Colonic mucosa (tissue), 4 donors: ENCODE measurements at regions of chr20 and their contacts with region 1.

Region 1: DNA sequence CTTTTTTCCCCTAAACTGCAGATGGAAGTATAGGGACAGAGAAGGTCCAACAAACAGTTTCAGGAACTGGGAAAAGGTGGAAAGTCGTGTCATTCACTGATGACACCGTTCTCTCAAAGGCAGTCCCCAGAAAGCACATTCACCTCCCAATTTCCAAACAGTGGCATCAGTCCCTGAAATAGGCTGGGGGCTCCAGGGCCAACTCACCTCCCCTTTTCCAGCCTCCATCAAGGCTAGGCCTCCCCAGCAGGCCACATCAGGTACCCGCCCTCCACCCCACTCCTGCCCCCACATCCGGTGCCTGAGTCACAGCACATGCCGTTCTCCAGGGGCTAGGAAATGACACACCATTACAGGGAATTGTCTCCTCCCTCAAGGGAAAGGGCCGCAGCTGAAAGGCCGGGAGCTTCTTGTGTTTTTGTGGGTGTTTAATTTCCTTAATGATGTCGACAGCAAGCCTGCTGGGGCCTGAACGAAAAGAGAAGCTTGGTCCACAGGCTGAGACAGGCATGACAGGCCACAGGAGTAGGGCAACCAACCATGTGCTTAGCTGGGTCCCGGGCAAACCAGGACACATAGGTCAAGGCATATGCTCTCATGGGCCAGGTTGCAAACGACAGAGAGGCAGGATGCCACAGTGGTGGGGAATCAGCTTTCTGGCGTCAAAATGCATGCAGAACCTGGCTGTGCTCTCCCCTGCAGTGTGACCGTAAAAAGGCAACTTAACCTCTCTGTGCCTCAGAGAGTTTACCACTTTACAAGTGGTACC is 39.2 kb downstream of the ZMYND8 start:
- DNase-seq: peak; percentile 62
- H3K4me3 ChIP-seq: no peak overlapping the region
- H3K27ac ChIP-seq: peak overlapping the region; percentile 96
- H3K4me1 ChIP-seq: peaks cover 44% of the 10 kb centered on the region
- H3K27me3 ChIP-seq: no peaks in the 10 kb centered on the region
- CTCF ChIP-seq: no peak

Region 2: DNA sequence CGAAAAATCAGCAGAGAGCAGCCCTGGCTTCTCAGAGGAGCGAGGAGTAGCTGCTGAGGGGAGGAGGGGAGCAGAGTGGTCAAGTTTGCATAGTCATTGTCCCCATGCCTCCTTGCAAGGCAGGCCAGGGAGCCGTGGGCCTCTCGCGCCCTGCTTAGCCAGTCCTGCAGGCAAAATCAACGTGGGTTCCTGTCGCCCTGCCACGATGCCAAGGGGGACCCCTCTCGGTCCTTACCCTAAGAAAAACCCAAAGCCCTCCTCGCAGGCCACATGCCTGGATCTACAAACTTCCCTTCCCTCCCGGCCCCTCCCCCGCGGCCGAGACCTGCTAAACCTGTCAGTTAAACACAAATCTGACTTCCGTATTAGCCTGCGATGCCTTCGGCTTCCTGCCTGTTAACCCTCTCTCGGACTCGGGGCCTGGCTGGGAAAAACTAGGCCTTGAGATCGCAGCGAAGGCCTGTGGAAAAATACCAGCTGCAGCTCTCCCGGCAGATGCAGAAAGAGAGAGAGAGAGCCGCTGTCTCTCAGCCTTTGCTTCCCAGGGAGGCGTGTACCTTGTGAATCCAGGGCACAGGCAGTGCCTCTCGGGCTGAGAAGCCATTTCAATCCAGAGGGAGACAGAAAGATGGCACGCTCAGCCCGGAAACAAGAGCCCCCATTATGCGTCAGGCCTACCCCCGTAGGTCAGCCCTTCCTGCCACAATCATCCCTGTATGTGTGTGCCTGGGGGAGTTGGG is 40.2 kb after region 1 on chr20:
- intact Hi-C with region 1: loop called (anchors 2 kb)
- DNase-seq: peak; percentile 95
- H3K4me3 ChIP-seq: no peak overlapping the region
- H3K27ac ChIP-seq: peak overlapping the region; percentile 99
- H3K4me1 ChIP-seq: peaks cover 54% of the 10 kb centered on the region
- H3K27me3 ChIP-seq: no peaks in the 10 kb centered on the region
- CTCF ChIP-seq: no peak

Region 3: GRCh38 chr20:47576516-47577033 is 259.3 kb after region 1 on chr20:
- intact Hi-C with region 1: no loop called
- DNase-seq: peak; percentile 80
- H3K4me3 ChIP-seq: no peak overlapping the region
- H3K27ac ChIP-seq: peak overlapping the region; percentile 46
- H3K4me1 ChIP-seq: peaks cover 11% of the 10 kb centered on the region
- H3K27me3 ChIP-seq: no peaks in the 10 kb centered on the region
- CTCF ChIP-seq: no peak

Region 4: DNA sequence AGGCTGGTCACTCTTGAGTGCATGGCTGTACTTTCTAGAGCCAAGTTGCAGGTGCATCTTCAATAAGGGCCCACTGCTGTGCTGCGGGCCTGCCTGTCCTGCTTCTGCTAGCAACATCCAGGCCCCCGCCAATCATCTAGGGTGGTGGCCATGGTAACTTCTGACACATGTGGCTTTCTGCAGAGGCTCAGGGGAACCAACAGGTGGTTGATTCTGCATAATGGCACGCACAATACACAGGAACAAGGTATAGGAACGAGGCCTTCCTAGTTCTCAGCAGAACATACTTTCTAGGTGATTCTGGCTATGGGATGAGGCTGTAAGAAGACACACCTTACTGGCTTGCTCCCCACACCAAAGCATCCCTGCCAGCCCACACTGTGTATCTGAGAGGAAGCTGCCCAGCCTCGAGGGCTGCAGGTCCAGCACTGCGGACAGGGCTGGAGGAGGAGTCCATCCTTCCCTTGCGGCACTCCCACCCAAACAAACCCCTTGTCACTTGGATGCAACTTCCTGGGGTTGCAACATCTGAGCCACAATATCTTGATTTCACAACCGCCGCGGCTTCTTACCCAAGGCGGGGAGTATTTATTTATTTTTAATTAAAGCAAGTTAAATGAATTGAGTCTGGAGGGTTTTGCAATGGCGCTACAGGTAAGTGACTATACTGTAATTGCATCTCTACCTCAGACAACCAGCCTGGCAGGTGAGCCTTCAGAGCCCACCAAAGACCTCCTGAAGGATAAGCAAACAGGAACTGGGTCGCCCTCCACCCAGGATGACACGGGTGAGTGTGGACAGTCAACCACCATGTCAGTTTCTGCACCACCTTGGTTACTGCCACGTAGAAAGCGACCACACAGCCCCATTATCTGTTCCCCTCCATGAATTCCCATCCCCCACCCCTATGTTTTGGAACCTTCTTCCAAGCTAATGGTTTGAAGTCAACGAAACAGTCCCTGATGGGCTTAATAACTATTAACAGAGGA is 418.4 kb after region 1 on chr20:
- intact Hi-C with region 1: no loop called
- DNase-seq: no peak
- H3K4me3 ChIP-seq: no peak overlapping the region
- H3K27ac ChIP-seq: no peak overlapping the region
- H3K4me1 ChIP-seq: no peaks in the 10 kb centered on the region
- H3K27me3 ChIP-seq: no peaks in the 10 kb centered on the region
- CTCF ChIP-seq: no peak